PC-3 (cell line): ENCODE measurements at regions of chr20 and their contacts with region 1.

Region 1: DNA sequence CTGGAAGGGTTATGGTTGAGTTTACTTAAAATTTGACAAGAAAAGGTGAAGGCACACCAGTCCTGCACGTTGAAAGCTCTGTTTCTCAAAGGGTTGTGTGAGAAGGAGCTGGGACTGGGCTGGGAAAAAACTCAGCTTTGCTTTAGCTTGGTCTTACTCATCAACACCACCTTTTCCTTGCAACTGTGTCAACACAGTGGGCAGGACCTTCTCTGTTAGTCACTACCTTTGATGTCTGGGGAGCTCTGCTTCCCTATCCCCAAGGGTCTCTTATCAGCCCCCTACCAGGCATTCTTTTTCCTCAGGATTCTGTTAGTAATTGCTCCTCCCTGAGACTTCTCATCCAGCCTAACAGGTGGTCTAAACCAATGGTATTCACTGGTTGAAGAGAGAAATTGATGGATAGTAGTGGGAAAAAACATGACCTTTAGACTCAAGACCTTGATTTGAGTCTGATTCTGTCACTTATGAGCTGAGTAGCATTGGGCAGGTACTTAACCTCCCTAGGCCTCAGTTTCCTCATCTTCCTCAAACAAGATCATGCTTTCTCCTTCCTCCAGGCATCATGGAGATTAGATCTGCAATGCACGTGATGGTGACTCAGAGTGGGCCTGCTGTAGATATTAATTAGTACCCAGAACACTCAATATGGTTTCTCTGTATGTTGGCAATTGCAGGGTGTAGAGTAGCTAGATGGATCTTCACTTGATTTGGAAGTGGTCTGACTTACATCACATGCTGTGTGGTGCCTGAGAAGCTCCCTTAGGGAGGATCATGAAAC is 17.2 kb upstream of the FOXA2 start:
- DNase-seq: peak; percentile 43
- ATAC-seq: peak; percentile 86
- H3K4me3 ChIP-seq: no peak overlapping the region
- H3K27ac ChIP-seq: peak overlapping the region; percentile 44
- H3K4me1 ChIP-seq: no peaks in the 10 kb centered on the region
- H3K27me3 ChIP-seq: peaks cover 22% of the 10 kb centered on the region
- CTCF ChIP-seq: no peak

Region 2: DNA sequence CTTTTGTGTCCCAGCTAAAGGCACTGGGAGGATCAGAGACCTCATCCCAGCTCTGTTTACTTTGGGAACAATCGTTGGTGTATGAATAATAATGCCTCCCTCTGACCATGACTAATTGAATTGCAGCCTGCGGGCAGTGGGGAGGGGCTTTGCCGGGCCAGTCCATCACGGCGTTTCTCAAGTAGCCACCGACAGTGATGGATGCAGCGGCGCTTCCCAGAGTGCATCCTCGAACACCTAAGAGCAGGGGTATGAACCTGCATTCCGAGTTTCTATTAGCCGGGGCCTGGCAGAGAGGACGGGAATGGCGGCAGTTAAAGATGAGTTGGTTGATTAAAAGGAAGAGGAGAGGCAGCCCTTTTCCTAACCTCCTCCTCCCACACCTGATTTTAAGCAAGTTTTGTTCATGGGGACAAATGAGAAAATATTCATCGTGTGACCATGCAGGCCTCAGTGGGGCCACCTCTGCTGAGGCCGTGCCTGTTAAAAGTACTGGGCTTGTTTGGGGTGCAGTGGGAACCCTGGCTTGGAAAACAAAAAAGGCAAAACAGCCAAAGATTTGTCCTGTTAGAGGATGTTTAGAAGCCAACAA is 171.3 kb before region 1 on chr20:
- CTCF ChIA-PET with region 1: no interaction called
- POLR2A ChIA-PET with region 1: interaction called, 11 read pairs
- intact Hi-C with region 1: no loop called
- DNase-seq: peak; percentile 89
- ATAC-seq: peak; percentile 95
- H3K4me3 ChIP-seq: peak overlapping the region; percentile 26; the same call in 1 of the 2 replicates
- H3K27ac ChIP-seq: no peak overlapping the region
- H3K4me1 ChIP-seq: peaks cover 17% of the 10 kb centered on the region
- H3K27me3 ChIP-seq: no peaks in the 10 kb centered on the region
- CTCF ChIP-seq: no peak